ACHN (cell line): ENCODE measurements at regions of chr11 and their contacts with region 1.

Region 1: DNA sequence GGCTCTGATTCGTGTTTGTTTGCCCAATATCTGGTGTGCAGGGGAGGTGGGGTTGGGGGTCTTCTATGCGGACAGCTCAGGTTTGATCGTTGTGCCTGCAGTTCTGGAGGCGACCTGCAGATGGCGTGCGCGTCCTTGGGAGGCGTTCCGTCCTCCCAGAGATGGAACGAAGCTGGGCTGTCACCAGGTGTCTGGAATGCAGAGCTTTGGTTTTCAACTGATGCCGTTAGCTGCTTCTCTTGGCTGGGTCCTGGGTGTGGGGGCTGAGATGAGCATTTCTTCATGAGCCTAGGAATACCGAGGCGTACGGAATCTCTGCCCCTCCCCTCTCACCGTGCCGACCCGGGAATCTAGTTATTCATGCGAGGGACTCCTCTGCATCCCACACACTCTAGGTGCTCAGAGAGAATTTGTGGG is 98.6 kb downstream of the CEP164 start:
- DNase-seq: peak; percentile 52

Region 2: DNA sequence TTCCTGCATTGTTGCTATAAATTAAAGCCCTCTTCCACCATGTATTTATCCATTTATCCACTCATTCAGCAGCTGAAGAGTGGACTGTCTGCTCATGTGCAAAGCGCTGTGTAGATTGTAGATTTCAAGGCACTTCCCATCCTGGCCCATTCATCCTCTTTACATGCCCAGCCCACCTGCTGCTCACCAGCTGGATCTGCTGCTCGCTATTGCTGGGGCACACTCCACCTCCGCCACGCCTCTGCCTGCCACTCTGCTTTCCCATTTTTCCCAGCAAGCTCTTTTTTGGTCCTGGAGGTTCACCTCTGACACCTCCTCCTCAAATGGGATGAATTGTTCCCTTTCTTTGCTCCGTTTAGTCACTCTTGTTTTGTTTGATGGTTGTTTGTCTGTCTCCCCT is 50.3 kb before region 1 on chr11:
- in situ Hi-C with region 1: no loop called
- DNase-seq: no peak

Region 3: GRCh38 chr11:117817368-117818040 is 391.2 kb after region 1 on chr11:
- in situ Hi-C with region 1: loop called (anchors 25 kb)
- DNase-seq: peak; percentile 88